Activated CD4-positive, alpha-beta T cell treated with anti-CD3 and anti-CD28 coated beads, Interleukin-2, amount 10 ng/mL, durations not matched to agents 24 days and 14 days (primary cell): ENCODE measurements at regions of chrX and their contacts with region 1.

Region 1: DNA sequence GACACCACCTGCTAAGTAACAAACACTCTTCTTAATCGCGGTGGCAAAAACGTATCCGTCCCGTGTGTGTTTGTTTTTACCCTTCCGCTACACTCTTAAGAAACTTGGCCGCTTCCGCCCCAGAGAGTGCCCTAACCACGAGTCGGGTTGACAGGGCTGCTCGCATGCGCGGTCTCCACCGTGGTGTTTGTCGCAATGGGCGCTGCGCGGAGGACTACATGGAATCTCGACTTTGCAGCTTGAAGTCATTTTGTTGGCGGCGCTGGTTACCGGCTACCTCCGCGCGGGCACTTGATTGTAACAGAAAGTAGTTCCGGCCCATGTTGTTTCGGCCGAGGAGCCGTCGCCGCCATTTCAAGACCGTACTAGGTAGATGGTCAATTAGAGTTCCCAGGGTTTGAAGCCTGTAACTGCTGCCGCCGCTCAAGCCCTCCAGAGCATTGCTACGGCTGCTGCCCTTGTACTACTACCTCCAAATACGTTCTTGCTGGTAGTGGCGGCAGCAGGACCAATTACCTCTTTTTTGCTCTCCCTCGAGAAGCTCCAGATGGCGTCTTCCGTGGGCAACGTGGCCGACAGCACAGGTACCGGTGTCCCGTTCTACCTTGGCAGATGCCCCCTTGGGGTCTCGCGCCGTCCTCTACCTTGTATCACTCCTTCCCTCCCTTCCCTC is at the start of gene OGT:
- DNase-seq: peak; percentile 97
- H3K4me3 Mint-ChIP-seq: peak within 1 kb of the TSS; percentile 100
- H3K27ac Mint-ChIP-seq: peak within 1 kb of the TSS; percentile 99
- H3K4me1 Mint-ChIP-seq: peaks cover 16% of the 10 kb centered on the region
- H3K27me3 Mint-ChIP-seq: no peaks in the 10 kb centered on the region
- total RNA-seq, gene OGT: 284 and 301 TPM in 2 replicates

Region 2: GRCh38 chrX:71111141-71111843 is 421.6 kb before region 1 on chrX and contains the start of gene IL2RG:
- intact Hi-C with region 1: loop called (anchors 5 kb)
- DNase-seq: peak; percentile 93
- H3K4me3 Mint-ChIP-seq: peak within 1 kb of the TSS; percentile 100
- H3K27ac Mint-ChIP-seq: peak within 1 kb of the TSS; percentile 95
- H3K4me1 Mint-ChIP-seq: peaks cover 31% of the 10 kb centered on the region
- H3K27me3 Mint-ChIP-seq: no peaks in the 10 kb centered on the region
- total RNA-seq, gene IL2RG: 337 and 348 TPM in 2 replicates

Region 3: GRCh38 chrX:71365876-71366673 is 166.8 kb before region 1 on chrX and contains the start of gene TAF1:
- intact Hi-C with region 1: loop called (anchors 2 kb)
- DNase-seq: peak; percentile 96
- H3K4me3 Mint-ChIP-seq: peak within 1 kb of the TSS; percentile 98
- H3K27ac Mint-ChIP-seq: peak within 1 kb of the TSS; percentile 100
- H3K4me1 Mint-ChIP-seq: peaks cover 21% of the 10 kb centered on the region
- H3K27me3 Mint-ChIP-seq: no peaks in the 10 kb centered on the region
- total RNA-seq, gene TAF1: 46.7 and 47.8 TPM in 2 replicates

Region 4: DNA sequence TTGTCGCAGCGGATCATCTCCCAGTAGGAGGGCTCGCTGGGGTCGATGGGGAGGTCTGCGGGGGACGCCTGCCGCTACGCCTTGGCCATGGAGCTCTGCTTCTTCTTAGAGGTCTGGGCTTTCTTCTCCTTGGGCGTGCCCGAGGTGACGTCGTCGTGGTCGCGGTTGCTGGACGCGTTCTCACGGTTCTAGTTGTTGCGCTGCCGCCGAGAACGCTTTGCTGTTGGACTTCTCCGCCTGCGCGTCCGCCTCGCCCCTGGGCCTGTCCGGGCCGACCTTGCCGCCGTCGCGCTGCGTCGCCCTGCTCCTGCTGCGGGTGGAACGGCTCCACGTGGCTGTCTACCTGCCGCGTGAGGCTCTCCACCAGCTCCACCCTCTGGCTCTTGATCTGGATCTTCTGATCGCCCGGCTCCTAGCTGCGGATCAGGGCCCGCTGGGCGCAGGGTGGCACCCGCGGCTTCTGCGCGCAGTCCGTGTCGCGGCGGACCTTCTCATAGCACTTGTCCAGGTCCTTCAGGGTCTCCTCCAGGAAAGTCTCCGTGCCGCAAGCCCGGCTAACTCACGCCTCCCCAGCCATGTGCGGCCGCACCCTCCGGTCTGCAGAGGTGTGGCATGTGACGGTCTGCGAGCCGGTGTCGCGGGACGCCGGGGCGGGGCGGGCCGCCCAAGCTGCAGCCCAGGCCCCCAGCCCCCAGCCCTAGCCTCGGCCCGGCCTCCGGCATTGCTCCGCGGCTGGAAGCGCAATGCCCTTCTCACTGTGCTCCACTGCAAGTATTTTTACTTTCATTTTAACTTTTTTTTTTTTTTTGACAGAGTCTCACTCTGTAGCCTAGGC is 40.4 kb before region 1 on chrX:
- intact Hi-C with region 1: loop called (anchors 2 kb)
- DNase-seq: peak; percentile 84
- H3K4me3 Mint-ChIP-seq: peak overlapping the region; percentile 86
- H3K27ac Mint-ChIP-seq: peak overlapping the region; percentile 77
- H3K4me1 Mint-ChIP-seq: peaks cover 10% of the 10 kb centered on the region
- H3K27me3 Mint-ChIP-seq: no peaks in the 10 kb centered on the region

Region 5: DNA sequence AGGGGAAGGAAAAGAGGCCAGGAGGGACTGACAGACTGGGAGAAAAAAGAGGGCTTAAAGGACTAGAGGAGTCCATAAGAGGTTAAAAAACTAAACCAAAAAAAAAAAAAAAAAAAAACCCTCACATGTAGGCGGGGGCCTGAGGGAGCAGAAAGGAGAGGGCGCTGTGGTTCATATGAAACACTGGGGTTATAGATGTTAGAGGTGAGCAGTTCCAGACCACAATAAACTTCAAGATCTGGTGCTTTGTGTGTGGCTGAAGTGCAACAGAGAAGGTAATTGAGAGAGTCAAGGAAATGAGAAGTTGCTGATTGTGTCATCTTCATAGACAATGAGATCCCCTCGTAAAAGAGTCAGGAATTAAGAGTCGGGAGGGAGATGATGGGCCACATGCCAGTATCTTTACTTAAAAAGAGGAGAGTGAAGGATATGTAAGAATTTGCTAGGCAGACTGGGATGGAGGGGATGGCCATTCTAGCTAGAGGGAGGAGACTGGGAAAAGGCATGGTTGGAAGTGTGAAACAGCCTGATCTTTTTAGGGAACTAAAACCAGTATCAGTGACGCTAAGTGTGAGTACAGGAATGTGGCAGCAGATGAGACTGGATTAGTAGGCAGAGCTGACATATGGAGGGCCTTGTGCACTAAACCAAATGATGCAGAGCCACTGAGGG is 18.4 kb before region 1 on chrX:
- intact Hi-C with region 1: loop called (anchors 2 kb)
- DNase-seq: peak; percentile 71
- H3K4me3 Mint-ChIP-seq: peak overlapping the region; percentile 4
- H3K27ac Mint-ChIP-seq: peak overlapping the region; percentile 70
- H3K4me1 Mint-ChIP-seq: peaks cover 9% of the 10 kb centered on the region
- H3K27me3 Mint-ChIP-seq: peaks cover 1% of the 10 kb centered on the region

Region 6: GRCh38 chrX:71618303-71618721 is 85.4 kb after region 1 on chrX and contains the start of gene CXCR3:
- intact Hi-C with region 1: loop called (anchors 1 kb)
- DNase-seq: peak; percentile 91
- H3K4me3 Mint-ChIP-seq: peak within 1 kb of the TSS; percentile 94
- H3K27ac Mint-ChIP-seq: peak within 1 kb of the TSS; percentile 97
- H3K4me1 Mint-ChIP-seq: peaks cover 70% of the 10 kb centered on the region
- H3K27me3 Mint-ChIP-seq: no peaks in the 10 kb centered on the region
- total RNA-seq, gene CXCR3: 34.5 and 35.2 TPM in 2 replicates

Region 7: GRCh38 chrX:72269671-72270251 is 736.9 kb after region 1 on chrX:
- intact Hi-C with region 1: loop called (anchors 10 kb)
- DNase-seq: peak; percentile 69
- H3K4me3 Mint-ChIP-seq: peak overlapping the region; percentile 67
- H3K27ac Mint-ChIP-seq: peak overlapping the region; percentile 91
- H3K4me1 Mint-ChIP-seq: peaks cover 31% of the 10 kb centered on the region
- H3K27me3 Mint-ChIP-seq: no peaks in the 10 kb centered on the region